Activated T-helper 1 cell treated with anti-CD3 and anti-CD28 coated beads, Interleukin-12 subunit alpha, Interleukin-12 subunit beta, Interleukin-2, Interleukin-4 antibody, amounts not matched to agents 30 ng/mL and 10 ng/mL and 1 ng/mL, durations not matched to agents 14 hours and 24 hours and 36 hours (primary cell): ENCODE measurements at regions of chr6 and their contacts with region 1.

Region 1: DNA sequence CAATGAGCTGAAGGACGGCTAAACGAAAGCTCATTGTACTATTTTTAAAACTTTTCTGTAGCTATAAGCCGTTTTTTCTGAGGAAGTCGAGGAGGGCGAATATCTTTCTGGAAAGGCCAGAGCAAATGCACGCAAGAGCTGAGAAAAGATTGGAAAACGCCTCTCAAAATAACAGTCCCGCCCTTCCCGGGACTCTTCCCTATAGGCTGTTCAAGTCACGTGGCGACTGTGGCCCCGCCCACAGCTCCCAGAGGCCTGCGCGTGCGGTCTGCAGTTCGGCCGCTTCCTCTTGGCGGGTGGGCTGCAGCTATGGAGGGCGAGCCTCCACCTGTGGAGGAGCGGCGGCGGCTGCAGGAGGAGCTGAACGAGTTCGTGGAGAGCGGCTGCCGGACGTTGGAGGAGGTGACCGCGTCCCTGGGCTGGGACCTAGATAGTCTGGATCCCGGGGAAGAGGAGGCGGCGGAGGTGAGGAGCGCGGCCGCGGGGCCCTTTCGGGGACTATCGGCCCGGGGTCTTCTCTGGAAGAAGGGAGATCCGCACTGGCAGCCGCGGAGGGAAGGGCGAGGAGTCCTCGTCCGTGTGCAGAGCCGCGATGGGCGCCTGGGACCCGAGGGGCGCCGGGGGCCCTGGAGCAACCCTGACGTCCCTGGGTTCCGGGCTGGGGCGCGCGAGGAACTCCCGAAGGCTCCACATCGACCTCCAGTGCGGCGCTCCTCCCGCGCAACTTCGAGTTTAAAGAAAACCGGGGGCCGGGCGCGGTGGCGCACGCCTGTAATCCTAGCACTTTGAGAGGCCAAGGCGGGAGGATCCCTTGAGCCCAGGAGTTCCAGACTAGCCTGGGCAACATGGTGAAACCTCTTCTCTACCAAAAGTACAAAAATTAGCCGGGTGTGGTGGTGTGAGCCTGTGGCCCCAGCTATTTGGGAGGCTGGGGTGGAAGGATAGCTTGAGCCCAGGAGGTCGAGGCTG is at the start of gene SNRNP48:
- DNase-seq: peak; percentile 88
- H3K4me3 Mint-ChIP-seq: peak within 1 kb of the TSS; percentile 100
- H3K27ac Mint-ChIP-seq: peak within 1 kb of the TSS; percentile 95
- H3K4me1 Mint-ChIP-seq: peaks cover 40% of the 10 kb centered on the region
- H3K27me3 Mint-ChIP-seq: no peaks in the 10 kb centered on the region
- total RNA-seq, gene SNRNP48: 17.7 and 18.0 TPM in 2 replicates

Region 2: DNA sequence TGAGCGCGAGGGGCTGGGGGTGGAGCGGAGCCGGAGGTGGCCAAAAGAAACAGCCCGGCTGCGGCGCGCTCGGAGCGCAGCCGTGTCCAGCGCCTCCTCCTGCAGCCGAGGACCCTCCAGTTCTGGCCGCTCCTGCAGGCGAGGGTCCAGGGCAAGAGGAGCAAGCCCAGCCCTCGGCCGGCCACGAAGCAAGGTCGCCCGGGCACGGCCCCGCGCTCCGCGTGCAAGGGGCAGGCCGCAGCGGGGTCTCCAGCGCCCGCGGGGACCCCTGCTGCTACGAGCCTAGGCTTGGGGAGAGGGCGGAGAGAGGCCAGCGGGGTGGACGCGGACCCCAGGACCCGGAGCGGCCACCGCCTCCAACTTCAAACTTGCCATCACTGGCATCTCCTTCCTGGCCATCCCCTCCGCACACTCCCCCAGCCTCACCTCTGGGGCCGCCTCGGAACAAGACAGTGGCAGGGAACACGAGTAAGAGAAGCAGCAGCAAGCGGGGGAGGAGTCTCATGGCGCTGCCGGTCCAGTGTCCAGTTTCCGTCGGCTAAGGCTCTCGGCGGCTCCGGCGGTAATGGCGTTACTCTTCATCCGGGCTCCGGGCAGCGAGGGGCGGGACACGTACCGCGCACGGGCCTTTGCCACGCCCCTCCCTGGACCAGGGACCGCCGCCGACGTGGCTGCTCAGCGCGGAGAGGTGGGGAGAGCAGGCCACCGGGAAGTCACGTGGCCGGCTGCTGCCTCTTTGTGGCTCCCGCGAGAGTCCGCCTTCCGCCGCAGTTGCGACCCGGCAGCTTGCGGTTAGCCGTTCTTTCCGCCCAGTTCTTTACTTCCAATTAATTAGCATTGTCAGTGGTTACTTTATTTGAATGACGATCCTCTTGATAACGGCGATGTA is 277.4 kb before region 1 on chr6 and contains the start of gene SSR1:
- intact Hi-C with region 1: loop called (anchors 1 kb)
- DNase-seq: peak; percentile 95
- H3K4me3 Mint-ChIP-seq: peak within 1 kb of the TSS; percentile 98
- H3K27ac Mint-ChIP-seq: peak within 1 kb of the TSS; percentile 94
- H3K4me1 Mint-ChIP-seq: peaks cover 35% of the 10 kb centered on the region
- H3K27me3 Mint-ChIP-seq: no peaks in the 10 kb centered on the region
- total RNA-seq, gene SSR1: 160 and 168 TPM in 2 replicates

Region 3: DNA sequence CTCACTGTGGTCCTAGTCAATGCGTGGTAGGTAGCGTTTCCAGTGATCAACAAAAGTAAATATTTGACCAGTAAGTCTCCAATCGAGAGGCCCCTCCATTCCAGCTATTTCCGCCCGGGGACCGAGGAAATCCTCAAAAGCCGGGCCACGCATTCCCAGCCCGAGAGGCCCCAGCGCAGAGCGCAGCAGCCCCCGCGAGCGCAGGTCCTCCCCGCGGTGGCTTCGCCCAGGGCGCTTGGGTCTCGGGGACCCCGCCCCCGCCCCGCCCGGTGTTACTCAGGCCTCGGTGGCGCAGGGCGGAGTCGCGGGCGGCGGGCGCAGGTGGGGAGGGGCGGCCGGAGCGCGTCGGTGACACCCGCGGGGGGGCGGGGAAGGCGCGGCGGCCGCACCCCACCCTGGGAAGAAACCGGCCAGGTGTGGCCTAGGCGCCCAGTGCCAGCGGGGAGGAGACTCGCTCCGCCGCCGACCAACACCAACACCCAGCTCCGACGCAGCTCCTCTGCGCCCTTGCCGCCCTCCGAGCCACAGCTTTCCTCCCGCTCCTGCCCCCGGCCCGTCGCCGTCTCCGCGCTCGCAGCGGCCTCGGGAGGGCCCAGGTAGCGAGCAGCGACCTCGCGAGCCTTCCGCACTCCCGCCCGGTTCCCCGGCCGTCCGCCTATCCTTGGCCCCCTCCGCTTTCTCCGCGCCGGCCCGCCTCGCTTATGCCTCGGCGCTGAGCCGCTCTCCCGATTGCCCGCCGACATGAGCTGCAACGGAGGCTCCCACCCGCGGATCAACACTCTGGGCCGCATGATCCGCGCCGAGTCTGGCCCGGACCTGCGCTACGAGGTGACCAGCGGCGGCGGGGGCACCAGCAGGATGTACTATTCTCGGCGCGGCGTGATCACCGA is 48.8 kb before region 1 on chr6 and contains the start of gene DSP:
- intact Hi-C with region 1: loop called (anchors 1 kb)
- DNase-seq: peak; percentile 3
- H3K4me3 Mint-ChIP-seq: peak within 1 kb of the TSS; percentile 82
- H3K27ac Mint-ChIP-seq: no peak within 1 kb of the TSS
- H3K4me1 Mint-ChIP-seq: peaks cover 6% of the 10 kb centered on the region
- H3K27me3 Mint-ChIP-seq: peaks cover 73% of the 10 kb centered on the region
- total RNA-seq, gene DSP: not detected in 2 replicates

Region 4: GRCh38 chr6:7615611-7616383 is 25.6 kb after region 1 on chr6:
- intact Hi-C with region 1: loop called (anchors 1 kb)
- DNase-seq: no peak
- H3K4me3 Mint-ChIP-seq: no peak overlapping the region
- H3K27ac Mint-ChIP-seq: no peak overlapping the region
- H3K4me1 Mint-ChIP-seq: peaks cover 18% of the 10 kb centered on the region
- H3K27me3 Mint-ChIP-seq: peaks cover 3% of the 10 kb centered on the region

Region 5: DNA sequence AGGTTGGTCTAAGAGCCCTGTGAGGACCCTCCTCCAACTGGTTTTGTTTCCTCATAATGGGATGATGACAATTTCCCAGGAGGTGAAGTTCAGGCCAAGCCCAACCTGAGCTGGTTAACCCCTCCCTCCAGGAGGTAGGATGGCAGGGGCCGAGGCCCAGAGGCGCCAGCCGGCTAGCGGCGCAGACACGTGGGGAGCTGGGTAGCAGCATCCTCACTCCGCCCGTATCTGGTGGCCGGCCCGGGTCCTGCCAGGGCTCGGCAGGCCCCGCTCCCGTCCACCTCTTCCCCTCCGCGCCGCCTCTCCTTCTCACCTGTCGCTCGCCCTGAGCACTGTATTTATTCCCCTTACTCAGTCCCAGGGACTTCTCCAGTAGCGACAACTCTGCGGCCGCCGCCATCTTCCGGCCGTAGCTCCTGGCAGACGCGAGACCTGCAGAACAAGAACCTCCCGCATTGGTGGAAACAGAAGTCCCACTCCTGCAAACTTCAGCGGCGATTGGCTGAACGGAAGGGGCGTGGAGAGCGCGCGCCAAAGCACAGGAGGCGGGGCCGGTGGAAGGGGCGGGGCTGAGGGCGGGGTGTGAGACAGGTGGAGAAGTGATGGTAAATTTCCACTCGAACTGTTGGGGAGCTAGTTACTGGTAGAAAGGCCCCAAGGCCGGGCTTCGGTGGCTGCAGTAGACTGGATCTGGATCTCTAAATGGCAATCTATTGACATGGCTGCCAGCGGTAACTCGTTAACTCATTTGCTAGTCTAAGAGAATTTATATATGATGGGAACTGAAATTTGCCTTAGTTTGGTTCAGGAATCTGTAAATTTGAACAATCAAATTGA is 512.1 kb after region 1 on chr6 and contains the start of gene EEF1E1:
- intact Hi-C with region 1: loop called (anchors 1 kb)
- DNase-seq: peak; percentile 87
- H3K4me3 Mint-ChIP-seq: peak within 1 kb of the TSS; percentile 92
- H3K27ac Mint-ChIP-seq: peak within 1 kb of the TSS; percentile 97
- H3K4me1 Mint-ChIP-seq: peaks cover 34% of the 10 kb centered on the region
- H3K27me3 Mint-ChIP-seq: peaks cover 4% of the 10 kb centered on the region
- total RNA-seq, gene EEF1E1: 92.8 and 99.8 TPM in 2 replicates